ENCODE measurements at regions of chr13 and their contacts with region 1.

Region 1: DNA sequence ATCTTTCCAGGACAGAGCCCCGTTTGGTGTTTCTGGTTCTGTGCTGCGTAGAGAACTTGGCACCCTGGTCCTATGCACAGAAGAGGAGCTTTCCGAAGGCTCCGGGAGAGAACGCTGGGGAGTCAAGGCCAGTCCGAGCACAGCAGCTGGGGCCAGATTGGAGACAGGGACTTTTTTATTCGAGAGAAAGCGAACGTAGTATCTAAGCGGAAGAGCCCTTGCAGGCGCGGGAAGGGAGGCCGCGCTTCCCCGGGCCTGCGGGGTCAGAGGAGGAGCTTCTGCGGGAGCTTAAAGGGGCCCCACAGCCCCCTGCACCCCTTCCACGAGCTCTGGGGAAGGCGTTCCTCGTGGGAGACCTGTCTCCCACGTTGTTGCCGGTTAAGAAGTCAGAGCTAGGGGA is 48.6 kb upstream of the ARHGEF7 start:
- DNase-seq: no peak
- ATAC-seq: no peak
- H3K4me3 Mint-ChIP-seq: peak overlapping the region; percentile 27
- H3K27ac Mint-ChIP-seq: no peak overlapping the region
- H3K4me1 Mint-ChIP-seq: peaks cover 4% of the 10 kb centered on the region
- H3K27me3 Mint-ChIP-seq: peaks cover 44% of the 10 kb centered on the region

Region 2: DNA sequence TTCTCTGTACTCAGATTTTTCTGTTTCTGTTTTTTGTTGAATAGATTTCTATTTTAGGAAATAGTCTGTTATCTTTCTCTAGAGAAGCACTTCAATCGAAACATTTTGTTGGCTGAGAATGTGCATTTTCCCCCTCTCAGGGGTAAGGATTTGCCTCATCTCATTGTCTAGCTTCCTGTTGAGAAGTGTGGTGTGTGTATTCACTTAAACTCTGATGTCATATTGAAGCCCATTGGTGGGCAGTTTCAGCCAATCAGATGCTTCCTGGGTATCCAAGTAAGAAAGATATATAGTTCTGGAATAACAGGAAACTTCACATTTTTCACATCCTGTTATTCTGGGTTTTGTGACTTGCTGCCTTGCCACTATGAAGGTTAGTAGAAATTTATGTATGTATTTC is 136.2 kb after region 1 on chr13:
- CTCF ChIA-PET with region 1: interaction called, 19 read pairs
- POLR2A ChIA-PET with region 1: no interaction called
- DNase-seq: peak; percentile 31
- ATAC-seq: peak; percentile 67
- H3K4me3 Mint-ChIP-seq: no peak overlapping the region
- H3K27ac Mint-ChIP-seq: no peak overlapping the region
- H3K4me1 Mint-ChIP-seq: peaks cover 53% of the 10 kb centered on the region
- H3K27me3 Mint-ChIP-seq: no peaks in the 10 kb centered on the region

Region 3: GRCh38 chr13:111216166-111216960 is 149.8 kb after region 1 on chr13:
- CTCF ChIA-PET with region 1: interaction called, 60 read pairs
- POLR2A ChIA-PET with region 1: no interaction called
- DNase-seq: peak; percentile 59
- ATAC-seq: peak; percentile 72
- H3K4me3 Mint-ChIP-seq: no peak overlapping the region
- H3K27ac Mint-ChIP-seq: peak overlapping the region; percentile 41
- H3K4me1 Mint-ChIP-seq: peaks cover 3% of the 10 kb centered on the region
- H3K27me3 Mint-ChIP-seq: no peaks in the 10 kb centered on the region

Region 4: GRCh38 chr13:111252446-111253364 is 186.2 kb after region 1 on chr13:
- CTCF ChIA-PET with region 1: no interaction called
- POLR2A ChIA-PET with region 1: no interaction called
- DNase-seq: no peak
- ATAC-seq: no peak
- H3K4me3 Mint-ChIP-seq: no peak overlapping the region
- H3K27ac Mint-ChIP-seq: no peak overlapping the region
- H3K4me1 Mint-ChIP-seq: peaks cover 2% of the 10 kb centered on the region
- H3K27me3 Mint-ChIP-seq: no peaks in the 10 kb centered on the region

Region 5: GRCh38 chr13:111403266-111403665 is 336.7 kb after region 1 on chr13:
- CTCF ChIA-PET with region 1: interaction called, 13 read pairs
- POLR2A ChIA-PET with region 1: no interaction called
- DNase-seq: no peak
- ATAC-seq: no peak
- H3K4me3 Mint-ChIP-seq: no peak overlapping the region
- H3K27ac Mint-ChIP-seq: no peak overlapping the region
- H3K4me1 Mint-ChIP-seq: no peaks in the 10 kb centered on the region
- H3K27me3 Mint-ChIP-seq: no peaks in the 10 kb centered on the region